Activated B cell treated with CpG ODN at 0.5 μM for 24 hours (primary cell): ENCODE measurements at regions of chr6 and their contacts with region 1.

Region 1: DNA sequence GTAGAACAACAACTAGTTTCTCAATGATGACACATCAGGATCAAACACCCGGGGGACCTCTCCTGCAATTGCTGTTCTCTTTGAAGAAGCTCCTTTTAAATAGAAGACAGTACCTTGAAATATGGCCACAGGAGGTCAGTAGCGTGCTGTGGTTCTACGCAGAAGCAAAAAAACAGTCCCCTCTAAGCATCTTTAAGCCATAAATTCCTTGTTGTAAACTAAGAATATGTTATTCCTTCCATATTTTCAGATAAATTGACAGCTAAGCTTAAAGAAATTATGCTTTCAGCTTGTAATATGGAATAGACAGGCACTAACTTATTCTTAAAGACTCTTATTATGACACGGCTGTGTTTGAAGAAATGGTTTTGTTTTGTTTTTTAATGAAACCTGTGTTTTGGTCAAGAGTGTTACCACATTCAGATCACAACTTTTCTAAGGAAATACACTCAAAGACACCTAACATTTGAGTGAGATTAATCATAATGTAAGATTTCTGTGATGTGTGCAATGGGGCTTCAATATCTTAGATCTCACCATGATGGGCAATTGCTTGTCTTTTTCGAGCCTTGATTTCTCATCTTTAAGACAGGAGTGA is 49.7 kb upstream of the IL20RA start:
- DNase-seq: no peak
- ATAC-seq: peak; percentile 34
- H3K4me3 Mint-ChIP-seq: peak overlapping the region; percentile 38
- H3K27ac Mint-ChIP-seq: peak overlapping the region; percentile 93
- H3K4me1 Mint-ChIP-seq: peaks cover 63% of the 10 kb centered on the region
- H3K27me3 Mint-ChIP-seq: no peaks in the 10 kb centered on the region
- CTCF ChIP-seq: peak; percentile 71

Region 2: GRCh38 chr6:136983687-136984086 is 110.8 kb before region 1 on chr6:
- CTCF ChIA-PET with region 1: no interaction called
- POLR2A ChIA-PET with region 1: no interaction called
- intact Hi-C with region 1: no loop called
- DNase-seq: no peak
- ATAC-seq: no peak
- H3K4me3 Mint-ChIP-seq: no peak overlapping the region
- H3K27ac Mint-ChIP-seq: no peak overlapping the region
- H3K4me1 Mint-ChIP-seq: no peaks in the 10 kb centered on the region
- H3K27me3 Mint-ChIP-seq: peaks cover 20% of the 10 kb centered on the region
- CTCF ChIP-seq: no peak

Region 3: DNA sequence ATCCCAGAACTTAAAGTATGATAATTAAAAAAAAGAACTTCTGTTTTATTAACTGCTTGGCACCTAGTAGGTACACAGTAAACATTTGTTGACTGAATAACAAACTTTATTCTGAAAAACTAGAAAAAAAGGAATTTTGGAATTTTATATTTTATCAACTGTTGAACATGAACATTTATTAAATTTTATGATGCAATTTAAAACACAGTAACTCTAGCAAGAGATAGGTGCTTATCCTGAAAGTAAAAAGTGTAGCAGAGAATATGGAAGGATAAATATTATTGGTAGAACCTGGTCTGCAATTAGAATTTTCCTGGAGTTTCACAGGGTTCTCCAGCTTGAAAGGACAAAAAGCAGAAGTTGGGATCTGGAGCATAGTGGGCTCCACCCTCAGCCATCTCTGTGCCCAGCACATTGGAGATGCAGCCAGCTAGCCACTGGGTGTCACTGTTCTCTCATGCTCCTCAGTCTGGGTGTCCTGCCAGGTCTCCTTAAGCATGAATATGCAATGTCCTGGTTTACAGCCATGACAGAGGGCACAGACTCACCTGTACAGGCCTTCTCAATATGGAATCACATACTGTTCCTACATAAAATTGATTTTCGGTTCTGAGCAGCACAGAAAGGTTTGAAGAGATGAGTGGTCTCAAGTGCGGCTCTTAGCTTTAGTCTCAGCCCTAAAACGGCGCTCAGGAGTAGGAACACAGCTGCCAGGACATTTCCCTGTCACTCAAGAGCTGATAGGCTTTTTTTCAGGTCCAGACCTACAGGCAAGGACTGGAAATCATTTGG is 18.0 kb before region 1 on chr6:
- CTCF ChIA-PET with region 1: interaction called, 46 read pairs
- POLR2A ChIA-PET with region 1: no interaction called
- intact Hi-C with region 1: loop called (anchors 1 kb)
- DNase-seq: peak; percentile 39
- ATAC-seq: peak; percentile 100
- H3K4me3 Mint-ChIP-seq: no peak overlapping the region
- H3K27ac Mint-ChIP-seq: no peak overlapping the region
- H3K4me1 Mint-ChIP-seq: peaks cover 2% of the 10 kb centered on the region
- H3K27me3 Mint-ChIP-seq: peaks cover 2% of the 10 kb centered on the region
- CTCF ChIP-seq: peak; percentile 77

Region 4: DNA sequence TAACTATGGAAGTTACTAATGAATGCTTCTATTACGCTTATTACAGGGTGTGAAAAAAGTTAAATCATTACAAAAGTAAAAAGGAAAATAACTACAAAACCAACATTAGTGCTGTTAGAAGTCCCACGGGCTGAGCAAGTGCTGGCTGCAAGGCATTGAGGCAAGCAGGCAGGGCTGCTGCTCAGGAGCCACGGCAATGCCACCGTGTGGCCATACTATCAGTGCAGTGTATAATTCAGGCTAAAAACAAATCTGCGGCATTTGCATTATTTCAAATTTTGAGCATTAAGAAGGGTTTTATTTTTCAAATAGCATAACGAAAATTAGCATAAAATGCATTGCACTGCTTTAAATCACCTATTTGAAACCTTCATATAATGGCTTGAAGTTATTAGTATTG is 107.6 kb after region 1 on chr6:
- CTCF ChIA-PET with region 1: interaction called, 34 read pairs
- POLR2A ChIA-PET with region 1: interaction called, 3 read pairs
- intact Hi-C with region 1: loop called (anchors 1 kb)
- DNase-seq: no peak
- ATAC-seq: peak; percentile 89
- H3K4me3 Mint-ChIP-seq: peak overlapping the region; percentile 24
- H3K27ac Mint-ChIP-seq: peak overlapping the region; percentile 65
- H3K4me1 Mint-ChIP-seq: peaks cover 37% of the 10 kb centered on the region
- H3K27me3 Mint-ChIP-seq: no peaks in the 10 kb centered on the region
- CTCF ChIP-seq: no peak

Region 5: GRCh38 chr6:137261393-137262160 is 167.1 kb after region 1 on chr6:
- CTCF ChIA-PET with region 1: interaction called, 9 read pairs
- POLR2A ChIA-PET with region 1: interaction called, 7 read pairs
- intact Hi-C with region 1: loop called (anchors 2 kb)
- DNase-seq: no peak
- ATAC-seq: peak; percentile 91
- H3K4me3 Mint-ChIP-seq: peak overlapping the region; percentile 32
- H3K27ac Mint-ChIP-seq: peak overlapping the region; percentile 74
- H3K4me1 Mint-ChIP-seq: peaks cover 40% of the 10 kb centered on the region
- H3K27me3 Mint-ChIP-seq: no peaks in the 10 kb centered on the region
- CTCF ChIP-seq: no peak

Region 6: GRCh38 chr6:137323860-137324259 is 229.3 kb after region 1 on chr6:
- CTCF ChIA-PET with region 1: interaction called, 12 read pairs
- POLR2A ChIA-PET with region 1: no interaction called
- intact Hi-C with region 1: no loop called
- DNase-seq: no peak
- ATAC-seq: no peak
- H3K4me3 Mint-ChIP-seq: no peak overlapping the region
- H3K27ac Mint-ChIP-seq: no peak overlapping the region
- H3K4me1 Mint-ChIP-seq: no peaks in the 10 kb centered on the region
- H3K27me3 Mint-ChIP-seq: no peaks in the 10 kb centered on the region
- CTCF ChIP-seq: no peak

Region 7: DNA sequence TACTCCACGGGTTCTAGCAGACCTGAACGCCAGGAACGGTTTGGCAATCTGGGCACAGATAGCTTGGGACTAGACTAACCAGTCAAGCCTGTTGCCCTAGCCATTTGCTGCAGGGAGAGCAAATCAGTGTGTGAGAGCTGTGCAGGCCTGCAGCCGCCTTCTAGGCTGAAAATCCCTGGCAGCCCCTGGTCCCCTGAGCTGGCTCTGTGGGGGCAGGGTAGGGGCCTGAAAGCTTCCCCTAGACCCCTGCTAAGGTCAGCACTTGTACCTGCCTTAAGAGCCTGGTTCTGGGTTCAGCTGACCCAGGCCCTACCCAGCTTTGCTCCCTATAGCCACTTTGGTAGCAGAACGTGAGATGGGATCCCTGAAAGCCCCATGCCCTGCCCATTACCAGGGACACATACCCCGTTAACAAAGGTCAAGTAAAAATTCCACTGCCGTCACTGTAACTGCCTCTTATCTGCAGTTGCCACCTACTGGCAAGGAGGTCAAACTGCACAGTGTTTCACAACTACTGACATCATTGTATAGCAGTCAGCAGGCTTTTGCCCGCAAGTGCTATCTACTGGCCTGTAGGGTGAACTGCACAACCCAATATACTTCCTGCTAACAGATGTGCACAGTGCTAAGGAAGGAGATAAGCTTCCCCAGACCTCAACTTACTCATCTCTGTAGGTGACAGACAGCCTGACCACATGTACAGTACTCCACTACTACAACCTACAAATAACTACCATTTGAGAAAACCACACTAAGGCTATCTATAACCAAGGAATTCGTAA is 494.7 kb after region 1 on chr6:
- CTCF ChIA-PET with region 1: interaction called, 4 read pairs
- POLR2A ChIA-PET with region 1: no interaction called
- intact Hi-C with region 1: loop called (anchors 1 kb)
- DNase-seq: no peak
- ATAC-seq: peak; percentile 90
- H3K4me3 Mint-ChIP-seq: no peak overlapping the region
- H3K27ac Mint-ChIP-seq: no peak overlapping the region
- H3K4me1 Mint-ChIP-seq: no peaks in the 10 kb centered on the region
- H3K27me3 Mint-ChIP-seq: peaks cover 30% of the 10 kb centered on the region
- CTCF ChIP-seq: no peak